CD14-positive monocyte (primary cell): ENCODE measurements at regions of chr3 and their contacts with region 1.

Region 1: DNA sequence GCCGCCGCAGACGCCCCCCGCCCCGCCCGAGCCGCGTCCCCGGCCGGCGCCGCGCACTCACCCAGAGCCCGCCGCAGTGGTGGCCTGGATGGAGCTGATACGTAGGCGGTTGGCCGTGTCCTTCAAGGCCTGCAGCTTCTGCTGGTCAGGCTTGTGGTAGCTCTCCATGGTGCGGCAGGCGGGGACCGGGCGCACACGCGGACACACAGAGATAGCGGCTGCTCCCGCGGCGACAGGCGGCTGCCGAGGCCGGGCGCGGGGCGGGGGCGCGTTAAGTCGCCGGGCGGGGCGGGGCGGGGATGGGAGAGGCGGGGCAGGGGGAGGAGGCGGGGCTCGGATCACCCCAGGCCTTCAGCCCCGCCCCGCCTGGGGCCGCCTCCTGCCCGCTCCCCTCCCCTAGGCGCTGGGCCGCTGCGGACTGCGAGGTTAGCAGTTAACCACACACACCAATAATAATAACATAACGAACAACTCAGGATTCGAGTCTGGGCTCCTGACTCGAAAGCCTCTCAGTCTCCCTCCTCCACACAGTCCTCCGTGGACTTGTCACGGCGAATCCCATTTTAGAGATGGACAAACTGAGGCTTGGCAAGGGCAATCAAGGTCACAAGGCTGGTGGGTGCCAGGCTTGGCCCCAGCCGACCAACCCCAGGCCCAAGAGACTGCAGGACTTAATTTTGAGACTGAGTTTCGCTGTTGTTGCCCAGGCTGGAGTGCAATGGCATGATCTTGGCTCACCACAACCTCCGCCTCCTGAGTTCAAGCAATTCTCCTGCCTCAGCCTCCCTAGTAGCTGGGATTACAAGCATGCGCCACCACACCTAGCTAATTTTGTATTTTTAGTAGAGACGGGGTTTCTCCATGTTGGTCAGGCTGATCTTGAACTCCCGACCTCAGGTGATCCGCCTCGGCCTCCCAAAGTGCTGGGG is at the start of gene TKT:
- DNase-seq: peak; percentile 77 to 81 (median 81)
- H3K4me3 ChIP-seq: peak within 1 kb of the TSS; percentile 83 to 99 (median 91)
- H3K4me3 Mint-ChIP-seq: peak within 1 kb of the TSS; percentile 94 to 96
- H3K27ac ChIP-seq: peak within 1 kb of the TSS; percentile 94 to 97
- H3K27ac Mint-ChIP-seq: peak within 1 kb of the TSS; percentile 96 to 100 (median 99)
- H3K4me1 ChIP-seq: peaks cover 41 to 43% of the 10 kb centered on the region in 2 donors
- H3K4me1 Mint-ChIP-seq: peaks cover 49% of the 10 kb centered on the region
- H3K27me3 ChIP-seq: no peaks in the 10 kb centered on the region
- H3K27me3 Mint-ChIP-seq: peaks cover 1 to 2% (median 2%) of the 10 kb centered on the region in 3 donors
- CTCF ChIP-seq: no peak
- polyA plus RNA-seq, gene TKT: 496 to 582 (median 562) TPM

Region 2: DNA sequence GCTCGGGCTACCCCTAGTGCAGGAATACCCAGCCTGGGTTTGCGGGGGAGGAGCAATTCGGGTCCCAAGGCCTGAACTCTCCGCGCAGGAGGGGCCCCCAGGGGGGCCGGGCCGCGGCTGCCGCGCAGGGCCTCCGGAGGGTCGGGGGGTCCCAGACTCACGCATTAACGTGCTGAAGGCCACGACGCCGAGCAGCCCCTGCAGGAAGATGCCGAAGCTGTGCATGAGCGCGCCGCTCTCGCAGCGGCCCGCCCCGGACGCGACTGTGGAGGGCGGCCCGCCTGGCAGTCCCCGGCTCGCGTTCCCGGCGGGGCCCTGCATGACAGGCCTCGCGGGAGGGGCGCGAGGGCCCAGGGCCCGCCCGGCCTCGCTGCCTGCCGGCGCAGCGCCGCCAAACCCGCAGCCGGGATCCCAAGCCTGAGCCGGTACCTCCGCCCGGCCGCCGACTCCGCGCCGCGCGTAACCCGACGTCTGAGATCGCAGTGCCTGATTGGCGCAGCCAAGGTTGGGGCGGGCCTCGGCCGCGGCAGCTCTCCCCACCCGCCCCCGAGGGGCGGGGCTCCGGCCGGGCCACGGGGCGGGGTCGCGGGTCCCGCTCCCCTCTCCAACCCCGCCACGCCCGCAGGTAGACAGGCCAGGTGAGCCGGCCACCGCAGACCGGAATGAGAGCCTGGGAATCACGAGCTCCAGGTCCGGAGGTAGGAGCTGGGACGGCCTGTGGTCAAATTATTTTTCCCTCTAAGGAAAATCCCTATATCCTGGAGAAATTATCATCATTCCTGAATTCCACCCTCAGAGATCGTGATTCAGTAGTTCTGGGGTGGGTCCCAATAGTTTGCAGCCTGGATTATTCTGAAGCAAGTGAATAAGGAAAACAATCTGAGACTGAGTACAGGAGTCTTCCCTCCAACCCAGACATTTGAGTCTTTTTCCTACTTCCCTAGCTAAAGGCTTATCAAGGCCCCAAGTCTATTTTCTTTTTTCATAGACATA is 358.6 kb before region 1 on chr3 and contains the start of gene STIMATE:
- intact Hi-C with region 1: loop called in 1 of 2 experiments (anchors 10 kb)
- DNase-seq: peak; percentile 66 to 75 (median 67)
- H3K4me3 ChIP-seq: peak within 1 kb of the TSS; percentile 72 to 91 (median 81)
- H3K4me3 Mint-ChIP-seq: peak within 1 kb of the TSS; percentile 95 to 97
- H3K27ac ChIP-seq: peak within 1 kb of the TSS in 1 of 2 donors; percentile 74
- H3K27ac Mint-ChIP-seq: peak within 1 kb of the TSS; percentile 78 to 93 (median 85)
- H3K4me1 ChIP-seq: peaks cover 46 to 57% of the 10 kb centered on the region in 2 donors
- H3K4me1 Mint-ChIP-seq: peaks cover 51% of the 10 kb centered on the region
- H3K27me3 ChIP-seq: no peaks in the 10 kb centered on the region
- H3K27me3 Mint-ChIP-seq: peaks cover 0 to 3% (median 1%) of the 10 kb centered on the region in 3 donors
- CTCF ChIP-seq: no peak
- polyA plus RNA-seq, gene STIMATE: 8.9 to 49.9 (median 11.7) TPM

Region 3: GRCh38 chr3:53102601-53103147 is 153.4 kb before region 1 on chr3:
- intact Hi-C with region 1: loop called in 1 of 2 experiments (anchors 5 kb)
- DNase-seq: peak; percentile 83 to 92 (median 91)
- H3K4me3 ChIP-seq: peak overlapping the region in 1 of 3 experiments; percentile 35
- H3K4me3 Mint-ChIP-seq: peak overlapping the region in 1 of 2 donors; percentile 23
- H3K27ac ChIP-seq: peak overlapping the region; percentile 66 to 81
- H3K27ac Mint-ChIP-seq: peak overlapping the region; percentile 90 to 98 (median 94)
- H3K4me1 ChIP-seq: peaks cover 37 to 39% of the 10 kb centered on the region in 2 donors
- H3K4me1 Mint-ChIP-seq: peaks cover 43% of the 10 kb centered on the region
- H3K27me3 ChIP-seq: no peaks in the 10 kb centered on the region
- H3K27me3 Mint-ChIP-seq: peaks cover 0 to 2% (median 0%) of the 10 kb centered on the region in 3 donors
- CTCF ChIP-seq: no peak